ENCODE measurements at regions of chr5 and their contacts with region 1.

Region 1: DNA sequence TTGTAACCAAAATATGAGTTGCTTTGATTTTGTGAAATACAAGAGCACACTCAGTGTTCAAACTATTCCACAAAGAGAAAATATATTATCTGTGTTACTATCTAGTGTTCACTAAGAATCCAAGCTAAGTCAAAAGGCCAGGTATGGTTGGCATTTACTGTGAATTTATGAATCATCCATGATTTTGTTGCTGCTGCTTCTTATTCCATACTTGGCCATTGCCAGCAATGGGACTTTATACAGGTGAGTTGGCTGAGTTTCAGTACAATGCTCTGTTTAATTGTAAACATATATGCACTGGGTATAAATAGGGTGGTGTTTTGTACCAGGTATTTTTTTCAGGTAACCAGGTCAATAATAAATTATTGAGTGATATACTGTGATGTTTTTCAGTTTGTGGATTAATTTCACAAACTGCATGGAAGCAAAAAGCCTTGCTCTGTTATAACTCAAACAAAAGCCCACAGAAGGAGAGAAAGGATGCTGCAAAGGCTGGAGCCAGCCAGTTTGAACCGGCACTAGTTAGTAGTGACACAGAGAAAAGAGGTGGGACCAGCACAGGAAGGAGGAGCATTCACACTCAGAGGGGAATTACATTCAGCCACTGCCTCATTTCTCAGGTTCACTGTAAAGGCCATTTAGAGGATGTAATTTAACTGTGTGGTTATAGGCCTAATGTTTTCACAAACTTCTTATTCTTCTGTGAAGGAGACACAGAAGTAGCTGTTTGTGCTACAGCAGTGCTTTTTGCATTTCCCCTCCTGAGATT is 381.8 kb downstream of the ADGRV1 start:
- DNase-seq: peak; percentile 44 to 58
- ATAC-seq: peak; percentile 96 to 100 (median 99)
- H3K4me3 ChIP-seq: no peak overlapping the region
- H3K4me3 Mint-ChIP-seq: no peak overlapping the region
- H3K27ac ChIP-seq: peak overlapping the region; percentile 56
- H3K27ac Mint-ChIP-seq: peak overlapping the region; percentile 75 to 78
- H3K4me1 ChIP-seq: peaks cover 2% of the 10 kb centered on the region
- H3K4me1 Mint-ChIP-seq: peaks cover 10 to 14% of the 10 kb centered on the region in 2 donors
- H3K27me3 ChIP-seq: no peaks in the 10 kb centered on the region
- H3K27me3 Mint-ChIP-seq: no peaks in the 10 kb centered on the region
- CTCF ChIP-seq: no peak

Region 2: GRCh38 chr5:91089758-91090157 is 149.3 kb after region 1 on chr5:
- intact Hi-C with region 1: loop called (anchors 10 kb)
- DNase-seq: no peak
- ATAC-seq: no peak
- H3K4me3 ChIP-seq: no peak overlapping the region
- H3K4me3 Mint-ChIP-seq: no peak overlapping the region
- H3K27ac ChIP-seq: no peak overlapping the region
- H3K27ac Mint-ChIP-seq: no peak overlapping the region
- H3K4me1 ChIP-seq: no peaks in the 10 kb centered on the region
- H3K4me1 Mint-ChIP-seq: peaks cover 19 to 21% of the 10 kb centered on the region in 2 donors
- H3K27me3 ChIP-seq: peaks cover 3% of the 10 kb centered on the region
- H3K27me3 Mint-ChIP-seq: no peaks in the 10 kb centered on the region
- CTCF ChIP-seq: no peak

Region 3: DNA sequence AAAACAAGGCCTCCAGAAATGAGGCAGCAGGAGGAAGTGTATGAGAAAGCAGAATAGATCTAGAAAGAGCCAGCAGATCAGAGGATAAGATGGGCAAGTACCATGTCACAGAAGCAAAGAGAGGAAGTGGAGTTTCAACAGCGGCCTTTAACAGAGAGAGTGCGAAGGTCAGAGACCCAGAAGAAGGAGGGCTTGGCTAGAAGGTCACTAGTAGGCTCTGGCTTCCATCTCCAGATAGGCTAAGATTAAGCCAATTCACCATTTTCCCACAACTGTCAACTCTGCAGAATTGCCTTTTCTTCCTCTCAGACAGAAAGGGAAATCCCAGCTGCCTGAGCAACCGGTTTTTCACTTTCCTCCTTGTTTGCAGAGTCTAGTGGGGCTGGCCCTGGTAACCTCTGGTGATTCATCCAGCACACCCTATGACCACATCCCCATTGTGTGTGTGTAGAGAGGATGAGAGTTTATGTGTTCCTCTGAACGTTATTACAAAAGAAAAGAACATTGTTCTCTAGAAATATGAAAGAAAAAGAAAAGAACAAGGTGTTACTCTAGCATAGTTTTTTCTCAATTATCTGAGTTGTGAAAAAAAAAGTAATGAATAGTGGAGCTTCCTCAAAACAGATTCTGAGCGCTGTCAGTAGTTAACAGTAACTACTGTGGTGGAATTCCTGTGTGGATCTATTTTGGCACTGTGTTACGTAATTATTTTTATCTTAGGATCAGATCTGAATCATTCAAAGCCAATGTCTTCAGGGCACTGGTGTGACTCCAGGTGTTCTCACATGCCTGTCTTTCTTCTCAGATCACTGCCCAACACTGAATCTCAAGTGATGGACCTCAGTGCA is 222.3 kb after region 1 on chr5:
- intact Hi-C with region 1: loop called (anchors 10 kb)
- DNase-seq: peak; percentile 62 to 67
- ATAC-seq: peak; percentile 90 to 98 (median 95)
- H3K4me3 ChIP-seq: no peak overlapping the region
- H3K4me3 Mint-ChIP-seq: peak overlapping the region; percentile 33
- H3K27ac ChIP-seq: peak overlapping the region; percentile 67
- H3K27ac Mint-ChIP-seq: peak overlapping the region; percentile 79 to 91
- H3K4me1 ChIP-seq: peaks cover 20% of the 10 kb centered on the region
- H3K4me1 Mint-ChIP-seq: peaks cover 28% of the 10 kb centered on the region in 2 donors
- H3K27me3 ChIP-seq: no peaks in the 10 kb centered on the region
- H3K27me3 Mint-ChIP-seq: no peaks in the 10 kb centered on the region
- CTCF ChIP-seq: no peak